B cell (primary cell): ENCODE measurements at regions of chr18 and their contacts with region 1.

Region 1: DNA sequence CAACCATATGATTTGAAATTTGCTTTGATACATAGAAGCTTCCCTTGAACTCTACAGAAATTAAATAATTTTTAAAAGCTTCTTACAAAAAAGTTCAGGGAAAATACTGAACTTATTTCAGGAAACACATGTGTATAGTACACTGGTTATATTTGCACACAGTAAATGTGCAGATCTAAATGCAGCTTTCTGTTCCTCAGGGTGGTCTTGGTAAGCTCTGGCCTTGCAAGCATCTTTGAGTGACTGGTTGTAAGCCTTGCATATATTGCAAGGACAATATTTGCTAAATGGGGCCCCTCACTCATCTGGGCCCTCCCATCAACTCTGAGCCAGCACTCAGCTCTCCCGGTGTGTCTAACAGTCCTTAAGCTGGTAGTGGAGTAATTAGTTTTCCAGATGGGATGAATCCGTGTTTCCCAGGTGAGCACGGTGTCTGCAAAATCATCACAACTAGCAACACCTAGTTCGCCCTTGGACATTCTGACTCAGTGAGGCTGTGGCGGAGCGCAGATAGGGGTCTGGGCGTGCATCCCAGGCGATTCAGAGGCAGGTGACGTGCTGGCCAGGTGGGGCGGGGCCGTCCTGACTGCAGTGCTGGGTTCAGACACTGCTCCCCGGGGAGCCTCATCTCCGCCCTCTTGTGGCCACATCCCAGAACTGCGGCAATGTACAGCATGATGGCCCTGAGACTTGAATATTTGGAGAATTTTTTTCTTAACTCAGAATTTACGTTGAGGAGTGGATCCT is 149.6 kb downstream of the MBP start:
- DNase-seq: peak; percentile 89
- ATAC-seq: peak; percentile 62
- H3K4me3 ChIP-seq: no peak overlapping the region
- H3K4me3 Mint-ChIP-seq: peak overlapping the region; percentile 77
- H3K27ac ChIP-seq: peak overlapping the region in 1 of 2 donors; percentile 9
- H3K27ac Mint-ChIP-seq: peak overlapping the region; percentile 90
- H3K4me1 ChIP-seq: peaks cover 51 to 57% of the 10 kb centered on the region in 2 donors
- H3K4me1 Mint-ChIP-seq: peaks cover 55% of the 10 kb centered on the region
- H3K27me3 ChIP-seq: no peaks in the 10 kb centered on the region
- H3K27me3 Mint-ChIP-seq: no peaks in the 10 kb centered on the region
- CTCF ChIP-seq: peak; percentile 90

Region 2: DNA sequence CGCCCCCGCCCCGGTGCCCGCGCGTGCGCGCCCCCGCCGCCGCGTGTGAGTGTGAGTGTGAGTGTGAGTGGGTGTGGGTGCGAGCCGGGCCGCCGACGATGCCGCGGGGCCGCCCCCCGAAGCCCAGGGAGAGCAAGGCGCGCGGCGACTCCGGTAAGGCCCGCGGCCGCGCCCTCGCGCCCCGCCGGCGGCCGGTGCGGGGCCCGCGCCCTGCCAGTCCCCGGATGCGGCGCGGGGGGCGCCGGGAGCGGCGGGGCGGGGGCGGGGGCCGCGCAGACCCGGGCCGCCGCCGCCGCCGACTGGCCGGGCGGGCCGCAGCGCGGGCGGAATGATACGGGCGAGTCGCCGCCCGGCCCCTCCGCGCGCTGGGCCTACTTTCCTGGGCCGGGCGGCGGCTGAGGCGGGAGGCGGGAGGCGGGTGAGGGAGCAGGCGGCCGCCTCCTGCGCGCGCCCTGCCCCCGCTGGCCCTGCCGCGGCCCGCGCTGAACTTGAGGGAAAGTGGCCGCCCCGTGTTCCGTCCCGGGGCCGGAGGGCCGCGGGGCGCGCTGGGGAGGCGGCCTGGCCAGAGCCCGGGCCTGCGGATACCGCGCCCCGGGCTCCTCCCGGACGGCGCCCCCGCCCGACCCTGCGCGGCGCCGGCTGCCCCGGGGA is 160.4 kb before region 1 on chr18 and contains the start of gene ZNF236:
- CTCF ChIA-PET with region 1: interaction called, 3 read pairs
- POLR2A ChIA-PET with region 1: interaction called, 6 read pairs
- intact Hi-C with region 1: loop called (anchors 5 kb)
- DNase-seq: peak; percentile 89
- ATAC-seq: peak; percentile 60
- H3K4me3 ChIP-seq: peak within 1 kb of the TSS; percentile 75 to 98 (median 95)
- H3K4me3 Mint-ChIP-seq: peak within 1 kb of the TSS; percentile 95
- H3K27ac ChIP-seq: peak within 1 kb of the TSS; percentile 85 to 90
- H3K27ac Mint-ChIP-seq: peak within 1 kb of the TSS; percentile 97
- H3K4me1 ChIP-seq: peaks cover 19 to 45% of the 10 kb centered on the region in 2 donors
- H3K4me1 Mint-ChIP-seq: peaks cover 60% of the 10 kb centered on the region
- H3K27me3 ChIP-seq: no peaks in the 10 kb centered on the region
- H3K27me3 Mint-ChIP-seq: no peaks in the 10 kb centered on the region
- CTCF ChIP-seq: no peak
- total RNA-seq, gene ZNF236: 39.2 and 39.5 TPM in 2 replicates

Region 3: GRCh38 chr18:76953583-76954233 is 29.3 kb before region 1 on chr18:
- CTCF ChIA-PET with region 1: interaction called, 287 read pairs
- POLR2A ChIA-PET with region 1: no interaction called
- intact Hi-C with region 1: no loop called
- DNase-seq: no peak
- ATAC-seq: no peak
- H3K4me3 ChIP-seq: no peak overlapping the region
- H3K4me3 Mint-ChIP-seq: no peak overlapping the region
- H3K27ac ChIP-seq: no peak overlapping the region
- H3K27ac Mint-ChIP-seq: no peak overlapping the region
- H3K4me1 ChIP-seq: no peaks in the 10 kb centered on the region
- H3K4me1 Mint-ChIP-seq: peaks cover 2% of the 10 kb centered on the region
- H3K27me3 ChIP-seq: no peaks in the 10 kb centered on the region
- H3K27me3 Mint-ChIP-seq: no peaks in the 10 kb centered on the region
- CTCF ChIP-seq: no peak

Region 4: GRCh38 chr18:76963936-76964335 is 19.1 kb before region 1 on chr18:
- CTCF ChIA-PET with region 1: interaction called, 287 read pairs
- POLR2A ChIA-PET with region 1: interaction called, 24 read pairs
- intact Hi-C with region 1: loop called (anchors 1 kb)
- DNase-seq: peak; percentile 65
- ATAC-seq: no peak
- H3K4me3 ChIP-seq: peak overlapping the region in 2 of 5 experiments; percentile 18 to 44
- H3K4me3 Mint-ChIP-seq: peak overlapping the region; percentile 71
- H3K27ac ChIP-seq: peak overlapping the region; percentile 26 to 93
- H3K27ac Mint-ChIP-seq: peak overlapping the region; percentile 94
- H3K4me1 ChIP-seq: peaks cover 63 to 67% of the 10 kb centered on the region in 2 donors
- H3K4me1 Mint-ChIP-seq: peaks cover 35% of the 10 kb centered on the region
- H3K27me3 ChIP-seq: no peaks in the 10 kb centered on the region
- H3K27me3 Mint-ChIP-seq: no peaks in the 10 kb centered on the region
- CTCF ChIP-seq: no peak

Region 5: DNA sequence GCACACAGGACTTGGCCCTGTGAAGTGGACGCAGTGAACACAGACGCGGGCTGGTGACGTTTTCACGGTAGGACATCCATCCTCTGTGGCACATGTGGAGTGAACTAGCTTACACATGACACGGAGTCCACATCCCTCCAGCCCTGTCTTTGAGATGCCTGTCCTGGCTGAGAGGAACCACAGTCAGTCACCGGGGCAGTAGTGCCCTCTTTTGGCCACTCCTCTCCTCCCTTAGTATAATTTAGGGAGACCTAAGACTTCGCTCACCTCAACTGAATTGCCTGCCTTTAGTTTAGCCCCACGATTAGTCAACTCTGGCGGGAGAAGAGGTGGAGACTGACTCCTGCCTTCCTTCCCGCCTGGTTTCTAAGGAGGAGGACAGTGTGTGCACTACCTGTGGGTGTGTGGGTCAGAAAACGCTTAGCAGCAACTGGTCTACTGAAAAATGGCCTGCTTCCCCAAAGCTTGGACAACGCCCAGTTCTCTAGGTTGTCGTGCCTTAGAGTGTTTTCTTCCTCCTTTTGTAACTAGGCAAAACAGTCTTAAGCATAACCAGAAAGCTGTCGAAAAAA is 79.0 kb after region 1 on chr18:
- CTCF ChIA-PET with region 1: interaction called, 23 read pairs
- POLR2A ChIA-PET with region 1: no interaction called
- intact Hi-C with region 1: loop called (anchors 2 kb)
- DNase-seq: peak; percentile 87
- ATAC-seq: peak; percentile 50
- H3K4me3 ChIP-seq: no peak overlapping the region
- H3K4me3 Mint-ChIP-seq: peak overlapping the region; percentile 77
- H3K27ac ChIP-seq: peak overlapping the region; percentile 91 to 97
- H3K27ac Mint-ChIP-seq: peak overlapping the region; percentile 100
- H3K4me1 ChIP-seq: peaks cover 77 to 80% of the 10 kb centered on the region in 2 donors
- H3K4me1 Mint-ChIP-seq: peaks cover 80% of the 10 kb centered on the region
- H3K27me3 ChIP-seq: no peaks in the 10 kb centered on the region
- H3K27me3 Mint-ChIP-seq: no peaks in the 10 kb centered on the region
- CTCF ChIP-seq: no peak

Region 6: DNA sequence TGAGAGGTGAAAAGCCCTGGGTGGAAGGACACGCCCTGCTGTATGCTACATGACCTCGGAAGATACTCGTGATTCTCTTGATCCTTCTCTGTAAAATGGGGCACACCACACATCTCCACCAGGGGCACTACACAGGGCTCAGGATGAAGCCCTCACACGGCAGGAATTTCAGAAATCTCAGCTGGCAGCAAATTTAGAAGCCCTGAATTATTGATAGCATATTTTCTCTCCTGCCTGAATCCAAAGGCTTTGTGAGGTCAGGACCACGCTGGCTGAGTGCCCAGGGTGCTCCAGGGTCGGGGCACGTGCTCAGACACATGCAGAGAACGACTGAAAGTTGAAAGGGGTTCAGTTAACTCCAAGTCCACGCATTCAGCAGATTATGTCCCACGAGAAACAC is 224.5 kb after region 1 on chr18:
- CTCF ChIA-PET with region 1: interaction called, 88 read pairs
- POLR2A ChIA-PET with region 1: no interaction called
- intact Hi-C with region 1: loop called (anchors 1 kb)
- DNase-seq: peak; percentile 65
- ATAC-seq: peak; percentile 65
- H3K4me3 ChIP-seq: no peak overlapping the region
- H3K4me3 Mint-ChIP-seq: peak overlapping the region; percentile 70
- H3K27ac ChIP-seq: no peak overlapping the region
- H3K27ac Mint-ChIP-seq: peak overlapping the region; percentile 65
- H3K4me1 ChIP-seq: peaks cover 4 to 28% of the 10 kb centered on the region in 2 donors
- H3K4me1 Mint-ChIP-seq: peaks cover 30% of the 10 kb centered on the region
- H3K27me3 ChIP-seq: peaks cover 0 to 7% (median 0%) of the 10 kb centered on the region in 4 experiments
- H3K27me3 Mint-ChIP-seq: peaks cover 4% of the 10 kb centered on the region
- CTCF ChIP-seq: peak; percentile 70